ENCODE measurements at regions of chr11 and their contacts with region 1.

Region 1: DNA sequence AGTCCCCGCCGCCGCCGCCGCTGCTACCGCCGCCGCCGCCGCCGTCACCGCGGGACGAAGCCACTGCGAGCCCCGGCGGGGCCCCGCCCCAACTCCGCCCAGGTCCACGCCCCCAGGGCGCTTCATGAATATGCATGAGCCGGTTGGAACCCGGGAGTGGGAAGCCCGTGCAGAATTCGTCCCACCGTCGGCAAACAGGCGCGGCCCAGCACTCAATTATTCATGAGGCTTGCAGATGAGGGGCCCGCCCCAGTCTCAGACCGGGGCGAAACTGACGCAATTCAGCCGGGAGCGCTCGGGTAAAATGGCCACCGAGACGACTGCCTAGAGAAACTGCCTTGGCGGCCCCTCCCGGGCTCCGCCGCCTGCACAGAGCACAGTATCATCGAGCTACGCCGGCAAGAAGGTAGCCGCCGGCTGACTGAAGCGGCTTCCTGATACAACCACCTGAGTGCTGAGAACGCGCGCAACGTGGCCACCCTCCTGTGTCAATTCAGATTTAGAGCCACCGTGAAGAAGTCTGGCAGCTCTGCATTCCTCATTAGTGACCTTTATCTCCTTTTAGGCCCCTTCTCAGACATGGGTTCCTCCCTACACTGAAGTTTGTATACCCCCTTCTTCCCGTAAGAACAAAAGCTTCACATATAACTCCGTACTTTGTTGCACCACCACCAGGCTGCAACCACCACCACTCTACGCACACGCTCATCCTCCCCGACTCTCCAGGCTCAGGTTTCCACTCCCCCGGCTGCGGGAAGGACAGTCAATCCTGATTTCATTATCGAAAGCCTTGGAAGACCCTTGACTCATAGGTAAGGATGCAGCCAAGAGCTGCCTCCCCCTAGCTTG is at the start of gene TNKS1BP1:
- DNase-seq: peak; percentile 88
- H3K4me3 ChIP-seq: peak within 1 kb of the TSS; percentile 55
- CTCF ChIP-seq: peak; percentile 3

Region 2: GRCh38 chr11:57260937-57261783 is 64.0 kb before region 1 on chr11:
- in situ Hi-C with region 1: no loop called
- DNase-seq: no peak
- H3K4me3 ChIP-seq: no peak overlapping the region
- CTCF ChIP-seq: no peak

Region 3: DNA sequence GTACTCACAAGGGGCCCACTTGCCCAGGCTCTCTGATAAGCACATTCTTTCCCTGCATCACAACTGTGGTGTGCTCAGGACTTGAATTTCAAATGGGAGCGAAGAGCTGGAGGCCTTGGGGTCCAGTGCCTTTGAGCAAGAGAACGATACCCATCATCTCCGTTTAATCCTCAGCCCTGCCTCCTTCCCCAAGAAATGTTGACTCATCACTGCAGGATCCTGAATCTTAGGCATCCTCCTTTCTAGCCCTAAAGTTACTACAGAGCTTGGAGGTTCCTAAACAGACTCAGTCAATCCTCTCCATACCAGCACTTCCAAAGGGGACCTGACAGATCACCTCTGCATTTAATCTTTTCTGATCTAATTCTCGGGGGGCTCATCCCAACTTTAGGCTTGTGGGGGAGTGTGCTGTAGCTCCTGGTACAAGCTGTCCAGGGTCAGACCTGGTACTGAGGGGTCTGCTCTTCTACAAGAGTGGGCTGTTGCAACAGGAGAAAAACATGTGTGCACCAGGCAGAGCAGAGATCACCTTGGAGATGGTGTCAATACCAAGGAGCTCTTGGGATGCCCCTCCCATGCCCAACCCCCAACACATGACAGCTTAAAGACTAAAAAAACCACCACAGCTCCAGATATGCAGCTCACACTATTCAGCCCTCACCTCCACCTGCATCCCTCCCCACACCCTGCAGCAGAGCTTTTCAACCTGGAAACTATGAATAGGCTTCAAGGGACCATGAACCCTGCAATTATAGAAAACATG is 69.3 kb after region 1 on chr11:
- in situ Hi-C with region 1: no loop called
- DNase-seq: no peak
- H3K4me3 ChIP-seq: no peak overlapping the region
- CTCF ChIP-seq: no peak

Region 4: GRCh38 chr11:57406337-57406904 is 81.3 kb after region 1 on chr11:
- in situ Hi-C with region 1: no loop called
- DNase-seq: no peak
- H3K4me3 ChIP-seq: no peak overlapping the region
- CTCF ChIP-seq: no peak

Region 5: GRCh38 chr11:57530596-57531507 is 205.7 kb after region 1 on chr11 and contains the start of gene TIMM10:
- in situ Hi-C with region 1: loop called (anchors 5 kb)
- DNase-seq: peak; percentile 90
- H3K4me3 ChIP-seq: peak within 1 kb of the TSS; percentile 68
- CTCF ChIP-seq: no peak